ENCODE measurements at regions of chr16 and their contacts with region 1.

Region 1: GRCh38 chr16:86222965-86223551 is 287.3 kb upstream of the FOXF1 start:
- DNase-seq: no peak

Region 2: DNA sequence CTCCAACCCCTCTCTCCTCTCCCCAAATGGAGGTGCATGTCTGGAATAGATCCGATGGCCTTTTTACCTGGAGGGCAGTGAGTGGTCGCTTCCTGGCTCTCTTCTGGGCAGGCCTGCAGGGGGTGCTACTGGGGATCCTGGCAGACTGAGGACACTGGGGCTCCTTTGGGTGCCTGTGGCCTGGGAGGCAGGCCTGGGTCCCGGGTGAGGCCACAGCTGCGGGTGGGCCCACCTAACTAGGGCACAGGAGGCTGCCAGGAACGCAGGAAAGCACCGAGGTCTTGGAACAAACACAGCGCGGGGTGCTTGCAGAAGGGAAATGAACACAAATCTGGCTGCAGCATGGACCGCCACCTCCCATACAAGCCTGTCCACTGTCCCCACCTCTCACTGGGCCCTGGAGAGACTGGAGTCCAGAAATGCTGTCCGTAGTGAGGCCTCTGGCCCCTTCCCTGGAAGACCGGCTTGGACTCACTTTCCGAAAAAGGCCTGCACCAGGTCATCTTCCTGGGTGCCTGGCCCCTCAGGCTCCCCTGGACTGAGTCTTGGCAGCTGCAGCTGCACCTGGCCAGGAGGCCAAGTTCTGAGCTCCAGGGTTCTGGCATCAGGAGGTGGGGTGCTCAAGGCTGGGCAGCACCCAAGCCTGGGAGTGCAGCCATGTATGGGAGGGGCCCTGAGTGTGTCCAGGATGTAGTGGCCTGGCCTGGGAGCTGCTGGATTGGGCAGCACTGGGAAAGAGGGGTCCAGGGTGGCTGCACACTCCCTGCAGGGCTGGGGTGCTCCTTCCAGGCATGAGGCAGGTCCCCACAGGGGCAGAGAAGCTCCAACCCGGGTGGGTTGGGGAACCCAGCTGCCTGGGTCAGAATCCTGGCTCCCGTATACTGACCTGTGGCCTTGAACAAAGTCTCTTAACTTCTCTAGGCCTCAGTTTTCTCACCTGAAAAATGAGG is 129.0 kb before region 1 on chr16:
- intact Hi-C with region 1: no loop called
- DNase-seq: no peak

Region 3: DNA sequence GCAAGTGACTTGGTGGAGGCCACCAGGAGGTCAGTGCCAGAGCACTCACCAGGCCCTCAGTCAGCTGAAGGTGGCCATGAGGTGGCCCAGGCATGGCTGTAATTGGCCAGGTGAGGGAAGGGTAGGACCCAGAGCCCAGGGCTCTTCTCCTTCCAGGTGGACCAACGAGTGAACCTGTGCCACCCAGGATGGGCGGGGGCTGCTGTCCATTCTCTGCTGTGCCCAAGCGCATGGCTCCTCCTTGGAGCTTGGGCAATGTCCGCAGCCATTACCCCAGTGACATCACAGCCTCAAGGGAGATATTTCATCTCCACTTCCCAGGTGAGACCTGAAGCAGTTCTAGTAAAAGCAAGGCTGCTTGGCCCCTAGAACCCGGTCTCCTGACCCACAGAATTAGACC is 15.7 kb before region 1 on chr16:
- intact Hi-C with region 1: loop called in 1 of 2 experiments (anchors 1 kb)
- DNase-seq: no peak

Measured in posterior vena cava (tissue), 2 donors.